Mucosa of descending colon (tissue), 3 donors: ENCODE measurements at regions of chr2 and their contacts with region 1.

Region 1: GRCh38 chr2:199459286-199460016 is 1.7 kb upstream of the SATB2 start:
- DNase-seq: peak; percentile 80 to 86 (median 85)
- ATAC-seq: peak; percentile 18
- H3K4me3 ChIP-seq: peak overlapping the region; percentile 65
- H3K4me1 ChIP-seq: peaks cover 8% of the 10 kb centered on the region
- CTCF ChIP-seq: no peak

Region 2: GRCh38 chr2:198309673-198310280 is 1149.7 kb before region 1 on chr2:
- intact Hi-C with region 1: loop called in 1 of 2 experiments (anchors 10 kb)
- DNase-seq: peak in 2 of 3 donors; percentile 39 to 86
- ATAC-seq: peak; percentile 55
- H3K4me3 ChIP-seq: no peak overlapping the region
- H3K4me1 ChIP-seq: peaks cover 14% of the 10 kb centered on the region
- CTCF ChIP-seq: peak; percentile 74

Region 3: GRCh38 chr2:199535445-199536177 is 76.2 kb after region 1 on chr2:
- intact Hi-C with region 1: no loop called
- DNase-seq: no peak
- ATAC-seq: no peak
- H3K4me3 ChIP-seq: no peak overlapping the region
- H3K4me1 ChIP-seq: no peaks in the 10 kb centered on the region
- CTCF ChIP-seq: no peak

Region 4: DNA sequence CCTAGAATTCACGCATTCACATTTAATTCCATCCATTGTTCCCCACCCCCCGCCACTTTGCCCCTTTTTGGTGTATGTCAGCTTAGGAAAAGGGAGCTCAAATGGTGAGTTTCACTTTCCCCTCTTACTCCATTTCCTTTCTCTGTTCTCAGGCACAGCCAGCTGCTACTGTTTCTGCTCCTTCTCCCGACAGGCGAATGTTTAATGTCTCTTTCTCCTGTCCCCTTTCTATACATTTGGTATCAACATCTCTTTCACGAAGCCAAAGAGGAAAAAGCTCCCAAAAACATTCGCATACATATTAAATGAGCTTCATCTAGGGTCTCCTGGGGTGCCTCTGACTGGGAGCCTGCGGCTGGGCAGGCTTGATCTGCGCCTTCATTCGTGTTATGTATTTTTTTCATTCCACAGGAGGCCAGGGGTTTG is 122.5 kb after region 1 on chr2:
- intact Hi-C with region 1: no loop called
- DNase-seq: no peak
- ATAC-seq: no peak
- H3K4me3 ChIP-seq: no peak overlapping the region
- H3K4me1 ChIP-seq: no peaks in the 10 kb centered on the region
- CTCF ChIP-seq: no peak